WTC11 (cell line): ENCODE measurements at regions of chr7 and their contacts with region 1.

Region 1: DNA sequence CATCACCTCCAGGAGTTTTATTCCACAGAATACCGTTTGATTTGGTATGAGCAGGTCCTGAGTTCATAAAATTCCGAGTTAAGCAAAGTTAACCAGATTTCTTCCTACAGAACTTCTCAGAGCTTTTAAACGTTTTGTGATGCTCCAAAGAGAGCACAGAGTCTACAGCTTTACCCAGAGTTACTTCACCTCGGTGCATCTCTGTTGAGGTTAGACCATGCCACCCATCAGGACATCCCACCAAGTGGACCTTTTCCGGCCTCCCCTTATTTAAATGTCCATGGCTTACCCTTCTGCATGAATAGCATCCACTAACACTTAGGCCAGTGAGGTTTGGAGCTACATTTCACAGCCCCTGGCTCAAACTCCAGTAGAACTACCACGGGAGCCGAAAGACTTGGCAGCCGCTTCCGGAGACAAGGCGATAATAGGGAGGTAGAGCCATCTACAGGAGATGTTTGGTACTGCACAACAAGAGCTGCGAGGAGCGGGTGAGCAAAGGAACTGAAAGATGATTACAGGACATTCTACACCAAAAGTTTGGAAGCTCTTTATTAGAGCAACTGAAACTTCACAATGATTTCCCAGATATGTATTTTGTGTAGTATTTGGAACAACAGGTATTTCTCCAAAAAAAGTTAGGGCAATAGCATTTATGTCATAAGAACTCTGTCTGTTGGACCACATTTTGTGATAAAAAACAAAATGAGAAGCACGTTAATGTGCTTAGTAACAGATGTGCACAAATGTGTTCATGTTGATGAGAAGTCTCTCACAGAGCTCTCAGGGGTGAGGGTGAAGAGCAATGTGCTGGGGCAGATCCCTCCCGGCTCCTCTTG is 174.7 kb downstream of the HERPUD2 start:
- DNase-seq: peak; percentile 71
- ATAC-seq: peak; percentile 89
- H3K4me3 Mint-ChIP-seq: no peak overlapping the region
- H3K27ac Mint-ChIP-seq: no peak overlapping the region
- H3K4me1 Mint-ChIP-seq: no peaks in the 10 kb centered on the region
- H3K27me3 Mint-ChIP-seq: no peaks in the 10 kb centered on the region
- CTCF ChIP-seq: peak; percentile 75

Region 2: GRCh38 chr7:35430547-35431153 is 89.5 kb before region 1 on chr7:
- CTCF ChIA-PET with region 1: interaction called, 33 read pairs
- POLR2A ChIA-PET with region 1: no interaction called
- DNase-seq: peak; percentile 52
- ATAC-seq: peak; percentile 98
- H3K4me3 Mint-ChIP-seq: no peak overlapping the region
- H3K27ac Mint-ChIP-seq: no peak overlapping the region
- H3K4me1 Mint-ChIP-seq: no peaks in the 10 kb centered on the region
- H3K27me3 Mint-ChIP-seq: no peaks in the 10 kb centered on the region
- CTCF ChIP-seq: peak; percentile 52

Region 3: GRCh38 chr7:35508623-35509400 is 11.4 kb before region 1 on chr7:
- CTCF ChIA-PET with region 1: interaction called, 20 read pairs
- POLR2A ChIA-PET with region 1: no interaction called
- DNase-seq: no peak
- ATAC-seq: peak; percentile 62
- H3K4me3 Mint-ChIP-seq: no peak overlapping the region
- H3K27ac Mint-ChIP-seq: no peak overlapping the region
- H3K4me1 Mint-ChIP-seq: peaks cover 24% of the 10 kb centered on the region
- H3K27me3 Mint-ChIP-seq: no peaks in the 10 kb centered on the region; the same call in 1 of the 2 replicates
- CTCF ChIP-seq: no peak

Region 4: GRCh38 chr7:35537067-35538023 is 17.2 kb after region 1 on chr7:
- CTCF ChIA-PET with region 1: interaction called, 14 read pairs
- POLR2A ChIA-PET with region 1: no interaction called
- DNase-seq: peak; percentile 84
- ATAC-seq: peak; percentile 96
- H3K4me3 Mint-ChIP-seq: peak overlapping the region; percentile 66
- H3K27ac Mint-ChIP-seq: no peak overlapping the region
- H3K4me1 Mint-ChIP-seq: 0 out of 2 replicates have a peak, but pooled peaks cover 3% of the 10 kb centered on the region
- H3K27me3 Mint-ChIP-seq: peaks cover 25% of the 10 kb centered on the region
- CTCF ChIP-seq: peak; percentile 88